Naive thymus-derived CD8-positive, alpha-beta T cell (primary cell): ENCODE measurements at regions of chr1 and their contacts with region 1.

Region 1: DNA sequence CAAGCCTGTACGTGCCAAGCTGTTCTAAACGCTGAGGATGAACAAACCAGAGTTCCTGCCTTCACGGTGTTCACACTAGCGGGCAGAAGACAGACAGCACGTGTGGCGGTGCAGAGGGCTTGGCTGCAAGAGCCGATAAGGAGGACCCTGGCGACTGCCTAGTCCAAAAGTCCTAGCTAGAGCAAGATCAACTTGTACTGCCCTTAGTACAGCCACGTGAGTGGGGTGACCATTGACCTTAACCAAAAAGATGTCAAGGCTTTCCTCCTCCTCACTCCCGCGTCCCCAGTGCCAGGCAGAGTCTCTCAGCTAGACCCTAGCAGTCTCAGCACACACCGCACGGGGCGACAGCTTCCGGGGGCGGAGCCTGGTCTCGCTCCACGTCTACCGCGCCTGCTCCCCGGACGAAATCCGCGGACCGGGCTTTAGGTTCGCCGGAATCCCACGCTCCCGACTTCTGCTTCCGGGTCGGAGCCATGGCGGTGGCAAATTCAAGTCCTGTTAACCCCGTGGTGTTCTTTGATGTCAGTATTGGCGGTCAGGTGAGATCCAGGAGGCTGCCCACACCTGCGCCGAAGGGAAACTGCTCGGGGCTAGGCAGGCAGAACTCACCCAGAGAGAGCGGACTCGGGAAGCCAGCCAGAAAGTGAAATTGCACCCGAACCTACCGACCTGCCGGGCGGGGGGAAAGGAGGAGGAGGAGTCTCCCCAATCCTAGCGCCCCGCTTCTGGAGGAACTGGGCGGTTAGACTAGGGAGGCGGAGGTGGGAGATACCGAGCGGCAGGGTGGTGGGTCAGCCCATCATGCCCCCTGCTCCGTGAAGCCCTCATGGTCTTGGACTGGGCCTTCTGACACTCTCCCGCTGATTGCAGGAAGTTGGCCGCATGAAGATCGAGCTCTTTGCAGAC is at the start of gene PPIH:
- DNase-seq: peak; percentile 88 to 95 (median 92)
- ATAC-seq: peak; percentile 98
- H3K4me3 Mint-ChIP-seq: peak within 1 kb of the TSS; percentile 94 to 100 (median 98)
- H3K27ac Mint-ChIP-seq: peak within 1 kb of the TSS; percentile 92 to 98 (median 96)
- H3K4me1 Mint-ChIP-seq: peaks cover 26 to 48% (median 44%) of the 10 kb centered on the region in 4 donors
- H3K27me3 Mint-ChIP-seq: no peaks in the 10 kb centered on the region
- polyA plus RNA-seq, gene PPIH: 82.3 to 100 (median 85.0) TPM

Region 2: GRCh38 chr1:42681741-42682483 is 23.7 kb after region 1 on chr1 and contains the start of gene YBX1:
- POLR2A ChIA-PET with region 1: interaction called, 88 read pairs
- DNase-seq: peak; percentile 85 to 98 (median 96)
- ATAC-seq: peak; percentile 89 to 92
- H3K4me3 Mint-ChIP-seq: peak within 1 kb of the TSS; percentile 94 to 99 (median 97)
- H3K27ac Mint-ChIP-seq: peak within 1 kb of the TSS; percentile 98 to 99 (median 98)
- H3K4me1 Mint-ChIP-seq: peaks cover 38 to 57% (median 56%) of the 10 kb centered on the region in 4 donors
- H3K27me3 Mint-ChIP-seq: peaks cover 0 to 1% (median 0%) of the 10 kb centered on the region in 5 donors
- polyA plus RNA-seq, gene YBX1: 80.5 to 89.2 (median 83.0) TPM

Region 3: DNA sequence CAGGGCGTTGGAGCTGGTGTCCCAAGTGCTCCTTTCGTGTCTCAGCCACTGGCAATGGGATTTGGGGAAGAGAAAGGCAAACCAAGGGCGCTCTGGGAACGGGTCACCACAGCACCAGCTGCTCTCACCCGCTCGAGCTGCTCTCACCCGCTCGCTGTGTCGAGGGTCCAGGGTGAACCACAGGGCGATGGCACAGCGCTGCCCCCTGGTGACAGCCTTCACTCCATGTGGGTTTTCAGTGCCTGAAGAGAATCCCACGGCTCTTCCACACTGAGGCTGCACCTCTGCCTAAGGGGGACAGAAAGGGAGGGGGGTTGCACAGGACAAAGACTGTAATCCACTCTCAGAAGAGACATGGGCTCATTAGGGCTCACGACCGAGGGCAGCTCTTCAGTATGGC is 88.9 kb after region 1 on chr1:
- POLR2A ChIA-PET with region 1: no interaction called
- DNase-seq: peak; percentile 13 to 71 (median 45)
- ATAC-seq: peak; percentile 45 to 68
- H3K4me3 Mint-ChIP-seq: no peak overlapping the region
- H3K27ac Mint-ChIP-seq: peak overlapping the region in 2 of 10 donors; percentile 15 to 33
- H3K4me1 Mint-ChIP-seq: peaks cover 0 to 2% (median under 1%) of the 10 kb centered on the region in 4 donors
- H3K27me3 Mint-ChIP-seq: no peaks in the 10 kb centered on the region